PC-9 (cell line): ENCODE measurements at regions of chr19 and their contacts with region 1.

Region 1: GRCh38 chr19:12440541-12441316 is at the start of gene ZNF443:
- DNase-seq: peak; percentile 98 to 99
- H3K4me3 ChIP-seq: peak within 1 kb of the TSS; percentile 89
- H3K27ac ChIP-seq: no peak within 1 kb of the TSS
- H3K4me1 ChIP-seq: peaks cover 11% of the 10 kb centered on the region; the same call in 1 of the 2 replicates
- H3K27me3 ChIP-seq: no peaks in the 10 kb centered on the region
- CTCF ChIP-seq: no peak; the same call in 1 of the 2 replicates
- total RNA-seq, gene ZNF443: 3.3 and 3.5 TPM in 2 replicates

Region 2: DNA sequence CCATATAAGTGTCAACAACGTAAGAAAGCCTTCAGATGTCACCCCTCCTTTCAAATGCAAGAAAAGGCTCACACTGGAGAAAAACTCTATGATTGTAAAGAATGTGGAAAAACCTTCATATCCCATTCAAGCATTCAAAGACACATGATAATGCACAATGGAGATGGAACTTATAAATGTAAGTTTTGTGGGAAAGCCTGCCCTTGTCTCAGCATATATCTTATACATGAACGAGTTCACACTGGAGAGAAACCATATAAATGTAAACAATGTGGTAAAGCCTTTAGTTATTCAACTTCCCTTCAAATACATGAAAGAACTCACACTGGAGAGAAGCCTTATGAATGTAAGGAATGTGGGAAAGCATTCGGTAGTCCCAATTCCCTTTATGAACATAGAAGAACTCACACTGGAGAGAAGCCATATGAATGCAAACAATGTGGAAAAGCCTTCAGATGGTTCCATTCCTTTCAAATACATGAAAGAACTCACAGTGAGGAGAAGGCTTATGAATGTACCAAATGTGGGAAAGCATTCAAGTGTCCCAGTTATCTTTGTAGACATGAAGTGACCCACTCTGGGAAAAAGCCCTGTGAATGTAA is 365.1 kb before region 1 on chr19:
- CTCF ChIA-PET with region 1: interaction called, 10 read pairs
- POLR2A ChIA-PET with region 1: no interaction called
- intact Hi-C with region 1: no loop called
- DNase-seq: peak in 1 of 2 experiments; percentile 38
- H3K4me3 ChIP-seq: no peak overlapping the region
- H3K27ac ChIP-seq: no peak overlapping the region
- H3K4me1 ChIP-seq: no peaks in the 10 kb centered on the region
- H3K27me3 ChIP-seq: no peaks in the 10 kb centered on the region
- CTCF ChIP-seq: no peak

Region 3: GRCh38 chr19:12294249-12295158 is 146.2 kb before region 1 on chr19 and contains the start of gene ZNF44:
- CTCF ChIA-PET with region 1: no interaction called
- POLR2A ChIA-PET with region 1: no interaction called
- intact Hi-C with region 1: loop called (anchors 1 kb)
- DNase-seq: peak; percentile 97 to 98
- H3K4me3 ChIP-seq: peak within 1 kb of the TSS; percentile 67
- H3K27ac ChIP-seq: no peak within 1 kb of the TSS
- H3K4me1 ChIP-seq: peaks cover under 1% of the 10 kb centered on the region; the same call in 1 of the 2 replicates
- H3K27me3 ChIP-seq: no peaks in the 10 kb centered on the region
- CTCF ChIP-seq: no peak
- total RNA-seq, gene ZNF44: 4.0 and 5.0 TPM in 2 replicates

Region 4: DNA sequence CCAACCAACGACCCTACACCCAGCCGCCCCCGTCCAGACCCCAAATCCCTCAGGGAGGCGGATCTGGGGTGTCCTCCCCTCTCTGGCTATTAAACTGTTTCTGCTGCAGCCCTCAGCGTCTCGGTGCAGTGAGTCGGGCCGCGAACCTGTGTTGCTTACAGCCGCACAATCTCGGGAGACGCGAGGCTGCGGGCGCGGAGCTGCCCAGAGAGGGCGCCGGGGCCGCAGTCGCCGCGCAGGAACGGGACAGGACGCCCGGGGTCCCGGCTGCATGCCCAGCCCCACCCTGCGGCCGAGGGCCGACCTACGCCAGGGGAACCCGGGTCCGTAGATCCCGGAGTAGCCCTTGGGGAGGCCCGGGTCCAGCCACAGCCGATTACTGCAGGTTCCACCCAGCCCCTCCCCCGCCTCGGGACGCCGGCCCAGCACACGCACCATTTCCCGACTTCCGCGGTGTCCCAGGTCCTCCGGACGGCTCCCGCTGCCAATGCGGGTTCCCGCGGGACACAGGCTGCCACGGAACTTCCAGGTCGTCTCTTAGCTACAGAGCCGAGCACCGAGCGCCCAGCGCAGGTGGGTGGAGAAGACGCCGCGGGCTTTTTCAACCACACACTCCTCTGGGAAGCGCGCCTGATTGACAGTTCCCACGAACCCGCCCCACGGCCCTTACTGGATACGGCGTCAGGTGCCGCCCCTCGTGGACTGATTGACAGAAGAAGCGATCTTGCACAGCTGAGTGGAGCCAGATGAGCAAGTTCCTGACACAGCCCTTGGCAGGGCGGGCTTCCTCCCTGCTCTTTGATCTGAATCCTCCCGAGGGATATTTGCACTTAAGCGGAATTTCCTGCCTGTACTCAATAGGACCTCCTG is 39.9 kb before region 1 on chr19 and contains the start of gene ZNF799:
- CTCF ChIA-PET with region 1: no interaction called
- POLR2A ChIA-PET with region 1: no interaction called
- intact Hi-C with region 1: loop called (anchors 5 kb)
- DNase-seq: peak; percentile 96 to 97
- H3K4me3 ChIP-seq: peak within 1 kb of the TSS; percentile 93
- H3K27ac ChIP-seq: peak within 1 kb of the TSS; percentile 7; the same call in 1 of the 2 replicates
- H3K4me1 ChIP-seq: peaks cover 11% of the 10 kb centered on the region; the same call in 1 of the 2 replicates
- H3K27me3 ChIP-seq: no peaks in the 10 kb centered on the region
- CTCF ChIP-seq: no peak; the same call in 1 of the 2 replicates
- total RNA-seq, gene ZNF799: 2.5 and 2.9 TPM in 2 replicates